IMR-90 (cell line): ENCODE measurements at regions of chr11 and their contacts with region 1.

Region 1: GRCh38 chr11:108647701-108648527 is 17.0 kb upstream of the DDX10 start:
- DNase-seq: peak; percentile 81
- ATAC-seq: peak; percentile 100
- H3K4me3 ChIP-seq: no peak overlapping the region
- H3K27ac ChIP-seq: no peak overlapping the region
- H3K4me1 ChIP-seq: no peaks in the 10 kb centered on the region
- H3K27me3 ChIP-seq: no peaks in the 10 kb centered on the region; the same call in 1 of the 2 replicates
- CTCF ChIP-seq: peak; percentile 96
- POLR2A ChIP-seq: peak; percentile 43; the same call in 1 of the 2 replicates
- RAD21 ChIP-seq: peak; percentile 98

Region 2: GRCh38 chr11:108121274-108122155 is 526.4 kb before region 1 on chr11 and contains the start of gene ACAT1:
- CTCF ChIA-PET with region 1: interaction called, 4 read pairs
- POLR2A ChIA-PET with region 1: no interaction called
- dilution Hi-C with region 1: no loop called
- in situ Hi-C with region 1: loop called (anchors 5 kb)
- intact Hi-C with region 1: loop called (anchors 1 kb)
- DNase-seq: peak; percentile 82
- ATAC-seq: peak; percentile 98
- H3K4me3 ChIP-seq: peak within 1 kb of the TSS; percentile 86
- H3K27ac ChIP-seq: peak within 1 kb of the TSS; percentile 70
- H3K4me1 ChIP-seq: peaks cover 3% of the 10 kb centered on the region
- H3K27me3 ChIP-seq: no peaks in the 10 kb centered on the region
- CTCF ChIP-seq: peak; percentile 18; the same call in 1 of the 2 replicates
- POLR2A ChIP-seq: peak; percentile 83
- RAD21 ChIP-seq: no peak
- total RNA-seq, gene ACAT1: 57.7 and 87.2 TPM in 2 replicates

Region 3: GRCh38 chr11:108222686-108223448 is 425.0 kb before region 1 on chr11 and contains the start of gene ATM:
- CTCF ChIA-PET with region 1: interaction called, 3 read pairs
- POLR2A ChIA-PET with region 1: no interaction called
- dilution Hi-C with region 1: no loop called
- in situ Hi-C with region 1: no loop called
- intact Hi-C with region 1: loop called (anchors 2 kb)
- DNase-seq: peak; percentile 99
- ATAC-seq: peak; percentile 95
- H3K4me3 ChIP-seq: peak within 1 kb of the TSS; percentile 73
- H3K27ac ChIP-seq: peak within 1 kb of the TSS; percentile 95
- H3K4me1 ChIP-seq: peaks cover 4% of the 10 kb centered on the region; the same call in 1 of the 2 replicates
- H3K27me3 ChIP-seq: no peaks in the 10 kb centered on the region
- CTCF ChIP-seq: peak; percentile 93
- POLR2A ChIP-seq: peak; percentile 65; the same call in 1 of the 2 replicates
- RAD21 ChIP-seq: peak; percentile 65
- total RNA-seq, gene ATM: 30.6 and 54.4 TPM in 2 replicates

Region 4: DNA sequence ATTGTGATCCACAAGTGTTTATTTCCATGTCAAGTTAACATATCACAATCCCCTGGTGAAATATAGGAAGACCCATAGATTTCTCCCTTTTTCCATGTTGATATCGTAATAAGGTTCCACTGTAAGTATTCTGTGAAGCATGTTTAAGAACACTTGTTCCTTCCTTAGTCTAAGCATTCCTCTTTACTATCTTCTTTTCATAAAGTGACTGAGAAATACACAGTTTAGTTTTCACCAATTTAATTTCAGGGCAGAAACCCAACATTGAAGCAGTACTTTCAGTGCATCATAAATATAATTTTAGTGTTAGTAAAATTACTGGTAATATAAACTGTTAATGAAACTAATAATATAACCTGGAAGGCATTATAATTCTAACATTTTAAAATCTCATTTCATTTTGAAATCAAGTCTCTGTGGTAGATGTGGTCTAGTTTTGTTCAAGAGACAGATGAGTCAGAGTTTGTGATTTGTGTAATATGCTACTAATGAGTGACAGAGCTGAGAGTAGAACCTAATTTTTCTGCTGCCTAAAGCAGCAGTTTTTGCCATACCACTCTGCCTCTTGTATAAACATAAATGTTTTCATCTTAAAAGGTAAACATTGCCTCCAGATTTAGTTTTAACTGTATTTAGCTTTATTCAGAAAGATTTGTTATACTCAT is 345.7 kb before region 1 on chr11:
- CTCF ChIA-PET with region 1: interaction called, 3 read pairs
- POLR2A ChIA-PET with region 1: no interaction called
- dilution Hi-C with region 1: no loop called
- in situ Hi-C with region 1: no loop called
- intact Hi-C with region 1: loop called (anchors 5 kb)
- DNase-seq: peak; percentile 52
- ATAC-seq: peak; percentile 62
- H3K4me3 ChIP-seq: no peak overlapping the region
- H3K27ac ChIP-seq: no peak overlapping the region
- H3K4me1 ChIP-seq: peaks cover 8% of the 10 kb centered on the region
- H3K27me3 ChIP-seq: no peaks in the 10 kb centered on the region
- CTCF ChIP-seq: no peak
- POLR2A ChIP-seq: no peak
- RAD21 ChIP-seq: no peak

Region 5: DNA sequence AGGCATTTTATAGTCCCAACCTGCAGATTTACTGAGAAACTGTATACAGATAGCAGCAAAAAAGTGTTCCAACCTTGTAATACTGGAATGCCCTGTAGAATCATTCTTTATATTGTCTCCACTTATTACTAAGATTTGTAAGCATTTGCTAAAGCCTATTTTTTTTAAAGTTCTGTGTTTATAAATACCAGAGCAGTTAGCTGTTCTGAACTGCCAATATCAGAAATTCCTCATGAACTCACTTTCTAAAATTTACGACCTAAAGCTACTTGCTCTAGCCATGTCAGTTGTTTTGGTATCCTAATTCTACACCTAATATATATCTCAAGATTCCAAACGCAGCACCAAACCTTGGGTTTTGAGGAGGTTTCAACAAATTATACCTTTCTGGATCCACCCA is 283.8 kb before region 1 on chr11:
- CTCF ChIA-PET with region 1: no interaction called
- POLR2A ChIA-PET with region 1: no interaction called
- dilution Hi-C with region 1: no loop called
- in situ Hi-C with region 1: no loop called
- intact Hi-C with region 1: loop called (anchors 5 kb)
- DNase-seq: peak; percentile 68
- ATAC-seq: peak; percentile 91
- H3K4me3 ChIP-seq: no peak overlapping the region
- H3K27ac ChIP-seq: no peak overlapping the region
- H3K4me1 ChIP-seq: peaks cover 7% of the 10 kb centered on the region
- H3K27me3 ChIP-seq: no peaks in the 10 kb centered on the region
- CTCF ChIP-seq: no peak
- POLR2A ChIP-seq: no peak
- RAD21 ChIP-seq: no peak

Region 6: DNA sequence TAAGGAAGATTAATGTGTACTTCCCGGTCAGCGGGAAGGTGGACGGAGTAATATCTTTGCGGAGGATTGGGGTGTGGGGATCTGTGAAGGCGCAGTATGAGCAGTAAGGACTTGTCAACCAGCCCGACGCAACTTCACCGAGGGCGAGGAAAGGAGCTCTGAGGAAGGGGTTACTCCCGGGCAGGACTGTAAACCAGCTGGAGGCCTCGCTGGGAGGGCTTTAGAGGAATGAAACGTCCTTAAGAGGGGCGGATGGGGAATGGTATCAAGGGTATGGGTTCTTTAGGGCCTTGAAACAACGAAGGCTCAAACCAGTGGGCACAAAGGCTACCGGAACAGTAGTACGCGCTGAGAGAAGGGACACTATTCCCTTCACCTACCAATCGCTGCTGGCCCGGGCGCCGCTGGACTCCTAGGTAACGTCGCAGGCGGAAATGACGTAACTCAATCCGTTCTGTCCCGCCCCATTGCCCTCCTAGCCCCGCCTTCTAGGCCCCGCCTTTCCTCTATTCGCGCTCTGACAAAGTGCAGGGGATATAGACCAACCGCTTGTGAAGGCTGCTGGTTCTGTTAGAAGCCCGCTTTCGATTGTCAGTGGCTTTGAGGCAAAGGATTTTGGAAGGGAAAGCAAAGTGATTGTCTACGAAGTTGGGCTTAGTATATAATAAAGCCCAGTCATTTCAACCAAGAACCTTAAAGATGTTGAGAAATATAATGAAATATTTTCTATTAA is 180.7 kb before region 1 on chr11 and contains the start of gene C11orf65:
- CTCF ChIA-PET with region 1: no interaction called
- POLR2A ChIA-PET with region 1: no interaction called
- dilution Hi-C with region 1: no loop called
- in situ Hi-C with region 1: no loop called
- intact Hi-C with region 1: loop called (anchors 5 kb)
- DNase-seq: peak; percentile 96
- ATAC-seq: peak; percentile 99
- H3K4me3 ChIP-seq: peak within 1 kb of the TSS; percentile 83
- H3K27ac ChIP-seq: peak within 1 kb of the TSS; percentile 95
- H3K4me1 ChIP-seq: peaks cover 2% of the 10 kb centered on the region; the same call in 1 of the 2 replicates
- H3K27me3 ChIP-seq: no peaks in the 10 kb centered on the region
- CTCF ChIP-seq: no peak
- POLR2A ChIP-seq: peak; percentile 95
- RAD21 ChIP-seq: no peak; the same call in none of the 2 replicates
- total RNA-seq, gene C11orf65: 0.18 and 0.56 TPM in 2 replicates

Region 7: DNA sequence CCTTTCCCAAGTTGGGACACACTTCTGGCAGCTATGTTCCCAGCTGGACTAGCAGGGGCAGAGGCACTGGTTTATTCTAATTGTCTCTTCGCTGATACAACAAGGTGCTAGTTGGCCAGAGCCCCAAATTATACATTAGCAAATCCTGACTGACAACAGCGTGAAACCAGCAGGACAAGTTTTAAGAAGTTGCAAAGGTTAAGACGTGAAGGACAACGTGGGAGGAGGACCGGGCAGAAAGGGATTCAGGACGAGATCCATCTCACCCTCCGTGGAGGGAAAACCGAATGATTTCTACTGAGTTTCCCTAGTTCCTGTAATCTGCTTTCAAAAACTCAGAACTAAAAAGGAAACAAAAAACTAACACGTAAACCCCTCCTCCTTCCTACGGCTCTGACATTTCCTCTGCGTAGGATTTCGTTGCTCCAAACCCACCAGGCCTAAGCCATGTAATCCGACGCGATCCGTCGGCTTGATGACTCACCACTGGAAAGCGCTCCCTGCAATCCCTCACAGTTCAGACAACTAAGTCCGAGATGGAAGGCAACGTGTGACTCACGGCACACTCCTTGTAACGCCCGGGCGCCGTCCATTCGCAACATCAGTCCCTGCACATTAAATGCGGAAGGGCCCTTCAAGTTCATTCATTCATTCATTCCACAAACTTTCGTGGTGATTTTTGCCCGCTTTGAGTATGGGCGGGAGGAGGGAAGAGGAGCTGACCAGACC is 150.4 kb before region 1 on chr11:
- CTCF ChIA-PET with region 1: interaction called, 3 read pairs
- POLR2A ChIA-PET with region 1: no interaction called
- dilution Hi-C with region 1: no loop called
- in situ Hi-C with region 1: no loop called
- intact Hi-C with region 1: loop called (anchors 2 kb)
- DNase-seq: peak; percentile 100
- ATAC-seq: peak; percentile 89
- H3K4me3 ChIP-seq: peak overlapping the region; percentile 54
- H3K27ac ChIP-seq: peak overlapping the region; percentile 89
- H3K4me1 ChIP-seq: peaks cover 3% of the 10 kb centered on the region
- H3K27me3 ChIP-seq: no peaks in the 10 kb centered on the region
- CTCF ChIP-seq: no peak
- POLR2A ChIP-seq: peak; percentile 71
- RAD21 ChIP-seq: no peak